HEK293T (cell line): ENCODE measurements at regions of chr14 and their contacts with region 1.

Region 1: GRCh38 chr14:68911594-68912227 is 67.4 kb downstream of the ACTN1 start:
- DNase-seq: peak; percentile 92

Region 2: GRCh38 chr14:68945587-68946488 is 34.1 kb after region 1 on chr14:
- CTCF ChIA-PET with region 1: no interaction called
- POLR2A ChIA-PET with region 1: no interaction called
- DNase-seq: no peak

Region 3: DNA sequence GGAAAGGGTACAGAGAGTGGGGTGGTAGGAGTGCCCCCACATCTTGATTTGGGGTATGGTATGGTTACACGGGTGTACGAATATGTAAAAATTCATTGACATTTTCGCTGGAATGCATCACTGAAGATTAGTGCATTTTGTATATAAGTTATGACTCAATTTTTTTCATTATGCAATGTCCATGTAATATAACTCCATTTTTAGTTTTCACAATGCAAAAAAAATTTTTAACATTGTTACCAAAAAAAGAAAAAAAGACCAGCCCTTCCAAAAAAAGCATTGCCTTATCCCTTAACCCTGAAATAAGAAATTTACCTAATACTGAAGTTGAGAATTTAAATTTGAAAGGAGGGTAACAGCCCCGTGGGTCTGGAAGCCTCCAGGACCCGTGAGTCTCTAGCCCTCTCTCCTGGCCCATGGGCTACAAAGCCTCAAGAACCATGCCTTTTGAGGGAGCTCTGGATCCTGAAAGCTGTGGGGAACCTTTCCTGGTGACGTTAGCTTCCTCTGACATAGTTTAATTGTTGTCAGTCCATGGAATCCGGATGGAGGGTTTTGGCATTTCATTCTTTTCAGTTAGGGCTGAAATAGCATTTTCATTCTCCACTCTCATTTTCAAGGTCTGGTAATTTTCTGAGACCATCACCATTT is 123.0 kb after region 1 on chr14:
- CTCF ChIA-PET with region 1: no interaction called
- POLR2A ChIA-PET with region 1: no interaction called
- DNase-seq: no peak

Region 4: DNA sequence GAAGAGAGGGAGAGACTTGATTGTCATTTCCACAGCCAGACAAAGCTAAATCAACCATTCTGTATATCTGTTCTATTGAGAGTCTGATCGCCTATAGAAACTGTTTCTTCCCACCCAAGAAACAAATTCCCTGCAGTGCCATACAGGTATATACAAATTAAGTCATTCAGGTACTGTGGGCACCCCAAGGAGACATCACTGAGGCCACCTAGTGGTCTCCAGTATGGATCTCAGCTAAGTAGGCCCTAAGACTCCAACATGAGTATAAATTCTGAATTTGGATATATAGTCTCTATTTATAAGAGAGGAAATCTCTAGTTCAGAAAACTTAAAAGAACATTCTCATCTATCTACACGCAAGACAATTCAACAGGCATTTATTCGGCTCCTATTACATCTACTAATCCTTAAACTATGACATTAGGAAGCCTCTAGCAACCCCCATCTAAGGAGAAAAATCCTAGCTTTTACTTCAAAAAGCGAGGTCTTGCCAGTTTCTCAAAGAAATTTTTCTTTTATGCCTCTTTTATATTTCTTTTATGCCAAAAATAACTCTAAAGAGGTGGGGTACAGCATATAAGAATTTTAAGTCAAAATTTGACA is 178.6 kb after region 1 on chr14:
- CTCF ChIA-PET with region 1: interaction called, 13 read pairs
- POLR2A ChIA-PET with region 1: no interaction called
- DNase-seq: peak; percentile 30

Region 5: GRCh38 chr14:69107407-69108003 is 195.8 kb after region 1 on chr14:
- CTCF ChIA-PET with region 1: interaction called, 14 read pairs
- POLR2A ChIA-PET with region 1: no interaction called
- DNase-seq: peak; percentile 66